HepG2 (cell line): ENCODE measurements at regions of chr14 and their contacts with region 1.

Region 1: DNA sequence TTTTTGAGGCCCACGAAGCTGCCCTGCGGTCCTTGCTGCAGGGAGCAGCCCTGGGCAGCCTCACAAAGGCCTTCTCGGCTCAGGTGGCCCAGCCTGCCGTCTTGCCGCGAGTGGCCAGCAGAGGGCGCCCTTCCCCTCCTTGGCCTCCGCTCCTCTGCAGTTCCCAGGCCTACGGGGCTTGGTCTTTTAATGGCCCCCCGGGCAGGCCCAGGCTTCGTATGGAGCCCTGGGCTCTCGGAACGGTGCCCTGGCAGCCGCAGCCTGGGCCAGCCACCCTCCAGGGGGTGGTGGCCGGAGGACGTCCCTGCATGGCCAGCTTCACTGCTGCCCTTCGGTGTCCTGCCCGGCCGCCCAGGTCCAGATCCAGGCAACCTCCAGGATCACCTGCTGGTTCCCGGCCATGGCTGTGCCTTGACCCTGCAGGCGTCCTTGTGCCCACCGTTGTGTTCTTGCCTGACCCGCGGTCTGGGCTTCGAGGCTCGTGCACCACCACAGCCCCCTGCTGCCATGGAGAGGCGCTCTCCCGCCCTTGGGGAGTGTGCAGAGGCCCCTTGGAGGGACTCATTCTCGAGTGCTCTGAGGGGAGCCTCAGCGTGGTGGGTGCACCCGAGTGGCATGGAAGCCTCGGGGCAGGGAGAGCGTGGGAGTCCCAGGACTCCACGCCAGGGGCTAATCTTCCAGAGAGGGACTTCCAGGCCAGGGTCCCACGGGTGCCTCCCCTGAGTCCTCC is 9.4 kb downstream of the ASPG start:
- DNase-seq: no peak
- ATAC-seq: peak; percentile 76
- H3K4me3 ChIP-seq: no peak overlapping the region
- H3K27ac ChIP-seq: no peak overlapping the region
- H3K4me1 ChIP-seq: peaks cover 7% of the 10 kb centered on the region; the same call in 1 of the 2 replicates
- H3K27me3 ChIP-seq: peaks cover 3 to 22% of the 10 kb centered on the region in 2 experiments; a peak in 3 of 5 replicates
- CTCF ChIP-seq: peak; percentile 90
- EP300 ChIP-seq: no peak
- POLR2A ChIP-seq: no peak
- RAD21 ChIP-seq: peak; percentile 38; the same call in 1 of the 2 replicates

Region 2: DNA sequence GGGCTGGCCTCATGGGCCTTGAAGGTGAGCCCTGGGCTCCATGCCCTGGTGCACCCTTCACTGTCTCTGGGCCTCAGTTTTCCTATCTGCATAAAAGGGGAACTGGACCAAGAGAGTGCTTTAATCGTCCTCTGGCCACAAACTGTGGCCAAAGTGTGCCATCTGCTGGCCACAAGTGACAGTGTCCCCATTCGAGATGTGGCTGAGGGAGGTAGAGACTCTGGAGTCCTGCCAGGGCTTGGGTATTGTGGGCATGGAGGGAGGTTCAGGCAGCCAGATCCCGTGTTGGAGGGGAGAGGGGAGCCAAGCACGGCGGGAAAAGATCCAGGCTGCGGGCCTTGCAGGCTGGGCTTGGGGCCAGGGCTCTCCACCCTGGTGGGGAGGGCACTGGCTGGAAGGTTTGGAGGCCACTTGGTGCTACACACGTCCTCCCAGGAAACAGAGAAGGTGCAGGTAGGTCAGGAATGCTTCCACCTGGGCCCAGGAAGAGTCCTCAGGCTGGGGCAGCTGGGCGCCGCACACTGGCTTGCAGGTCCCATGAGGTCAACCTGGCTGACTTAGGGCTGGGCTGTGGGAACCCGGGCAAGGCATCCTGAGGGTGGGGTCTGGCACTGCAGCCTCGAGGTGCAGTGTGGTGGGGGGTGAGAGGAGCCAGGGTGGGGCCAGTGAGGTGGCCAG is 36.2 kb after region 1 on chr14:
- CTCF ChIA-PET with region 1: interaction called, 6 read pairs
- POLR2A ChIA-PET with region 1: no interaction called
- in situ Hi-C with region 1: loop called (anchors 5 kb)
- intact Hi-C with region 1: no loop called
- DNase-seq: peak; percentile 23
- ATAC-seq: peak; percentile 59
- H3K4me3 ChIP-seq: no peak overlapping the region
- H3K27ac ChIP-seq: no peak overlapping the region
- H3K4me1 ChIP-seq: no peaks in the 10 kb centered on the region
- H3K27me3 ChIP-seq: peaks cover 0 to 15% of the 10 kb centered on the region in 2 experiments; a peak in 4 of 5 replicates
- CTCF ChIP-seq: peak; percentile 84
- EP300 ChIP-seq: no peak
- POLR2A ChIP-seq: no peak
- RAD21 ChIP-seq: peak; percentile 24; the same call in 1 of the 2 replicates